Dendritic cell treated with granulocyte-macrophage colony-stimulating factor and Interleukin-4, amounts not matched to agents 40 ng/mL and 50 ng/mL, for 4 days (primary cell): ENCODE measurements at regions of chr11 and their contacts with region 1.

Region 1: GRCh38 chr11:75351791-75352587 is 528 bp upstream of the ARRB1 start:
- H3K4me3 Mint-ChIP-seq: peak overlapping the region; percentile 94
- H3K27ac Mint-ChIP-seq: peak overlapping the region; percentile 87
- H3K4me1 Mint-ChIP-seq: peaks cover 78% of the 10 kb centered on the region
- H3K27me3 Mint-ChIP-seq: peaks cover 3% of the 10 kb centered on the region

Region 2: DNA sequence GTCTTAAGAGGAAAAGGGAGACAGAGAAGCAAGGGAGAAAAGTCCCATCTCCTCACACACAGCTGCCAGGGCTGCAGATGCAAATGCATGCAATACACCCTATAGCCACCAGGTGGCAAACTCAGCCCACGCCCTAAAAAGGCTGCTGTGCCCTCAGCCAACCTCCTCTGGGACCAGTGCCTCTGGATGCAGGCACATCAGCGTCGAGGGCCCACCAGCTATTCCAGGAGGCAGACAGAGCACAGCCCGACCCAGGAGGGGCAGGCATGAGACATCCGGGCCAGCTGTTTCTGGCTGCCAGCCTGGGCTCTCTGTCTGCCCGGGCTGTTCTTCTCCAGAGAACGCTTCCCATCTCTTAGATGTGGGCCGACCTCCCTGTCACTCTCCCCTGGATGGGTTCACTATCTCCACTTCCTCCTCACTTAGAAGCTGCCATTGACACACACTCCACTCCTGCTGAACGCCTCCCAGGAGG is 71.7 kb before region 1 on chr11:
- intact Hi-C with region 1: loop called (anchors 10 kb)
- H3K4me3 Mint-ChIP-seq: no peak overlapping the region
- H3K27ac Mint-ChIP-seq: no peak overlapping the region
- H3K4me1 Mint-ChIP-seq: peaks cover 39% of the 10 kb centered on the region
- H3K27me3 Mint-ChIP-seq: no peaks in the 10 kb centered on the region

Region 3: DNA sequence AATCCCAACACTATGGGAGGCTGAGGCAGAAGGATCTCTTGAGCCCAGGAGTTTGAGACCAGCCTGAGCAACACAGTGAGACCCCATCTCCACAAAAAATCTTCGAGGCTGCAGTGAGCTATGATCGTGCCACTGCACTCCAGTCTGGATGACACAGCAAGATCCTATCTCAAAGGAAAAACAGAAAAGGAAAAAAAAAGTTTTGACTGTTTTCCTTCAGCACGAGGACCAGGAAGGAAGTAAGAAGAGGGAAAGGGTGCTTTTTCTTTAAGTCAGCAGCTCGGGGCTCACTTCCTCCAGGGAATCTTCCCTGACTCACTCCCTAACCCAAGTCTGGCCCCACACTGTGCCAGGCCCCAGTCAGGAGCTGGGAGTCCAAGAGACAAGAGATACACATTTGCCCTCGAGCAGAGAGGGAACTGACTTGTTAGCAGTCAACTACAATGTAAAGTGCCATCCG is 14.8 kb before region 1 on chr11:
- intact Hi-C with region 1: loop called (anchors 2 kb)
- H3K4me3 Mint-ChIP-seq: peak overlapping the region; percentile 27
- H3K27ac Mint-ChIP-seq: peak overlapping the region; percentile 80
- H3K4me1 Mint-ChIP-seq: peaks cover 99% of the 10 kb centered on the region
- H3K27me3 Mint-ChIP-seq: no peaks in the 10 kb centered on the region

Region 4: DNA sequence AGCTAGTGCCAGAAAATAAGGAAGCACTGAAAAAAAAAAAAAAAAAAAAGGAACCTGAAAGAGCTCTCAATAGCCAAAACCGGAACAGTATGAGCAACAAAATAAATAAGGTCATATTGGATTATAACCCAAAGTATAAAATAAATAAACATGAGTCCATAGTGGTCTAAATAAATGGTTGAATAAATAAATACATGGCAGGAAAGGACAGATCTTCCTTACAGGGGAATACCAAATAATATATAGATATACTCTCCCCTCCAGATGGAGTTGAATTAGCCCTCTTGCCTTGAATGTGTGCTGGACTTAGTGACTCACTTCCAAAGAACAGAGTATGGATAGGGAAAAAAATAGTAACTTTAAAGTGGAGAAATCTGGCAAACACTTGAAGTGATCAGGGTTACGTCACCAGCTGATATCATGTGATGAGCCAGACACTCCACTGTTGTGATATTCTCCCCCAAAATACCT is 13.8 kb after region 1 on chr11:
- intact Hi-C with region 1: loop called (anchors 2 kb)
- H3K4me3 Mint-ChIP-seq: peak overlapping the region; percentile 65
- H3K27ac Mint-ChIP-seq: peak overlapping the region; percentile 96
- H3K4me1 Mint-ChIP-seq: peaks cover 42% of the 10 kb centered on the region
- H3K27me3 Mint-ChIP-seq: no peaks in the 10 kb centered on the region

Region 5: GRCh38 chr11:76577199-76577920 is 1225.4 kb after region 1 on chr11:
- intact Hi-C with region 1: no loop called
- H3K4me3 Mint-ChIP-seq: no peak overlapping the region
- H3K27ac Mint-ChIP-seq: no peak overlapping the region
- H3K4me1 Mint-ChIP-seq: peaks cover 6% of the 10 kb centered on the region
- H3K27me3 Mint-ChIP-seq: peaks cover 4% of the 10 kb centered on the region